Activated naive CD4-positive, alpha-beta T cell treated with anti-CD3 and anti-CD28 coated beads for 36 hours (primary cell): ENCODE measurements at regions of chr1 and their contacts with region 1.

Region 1: DNA sequence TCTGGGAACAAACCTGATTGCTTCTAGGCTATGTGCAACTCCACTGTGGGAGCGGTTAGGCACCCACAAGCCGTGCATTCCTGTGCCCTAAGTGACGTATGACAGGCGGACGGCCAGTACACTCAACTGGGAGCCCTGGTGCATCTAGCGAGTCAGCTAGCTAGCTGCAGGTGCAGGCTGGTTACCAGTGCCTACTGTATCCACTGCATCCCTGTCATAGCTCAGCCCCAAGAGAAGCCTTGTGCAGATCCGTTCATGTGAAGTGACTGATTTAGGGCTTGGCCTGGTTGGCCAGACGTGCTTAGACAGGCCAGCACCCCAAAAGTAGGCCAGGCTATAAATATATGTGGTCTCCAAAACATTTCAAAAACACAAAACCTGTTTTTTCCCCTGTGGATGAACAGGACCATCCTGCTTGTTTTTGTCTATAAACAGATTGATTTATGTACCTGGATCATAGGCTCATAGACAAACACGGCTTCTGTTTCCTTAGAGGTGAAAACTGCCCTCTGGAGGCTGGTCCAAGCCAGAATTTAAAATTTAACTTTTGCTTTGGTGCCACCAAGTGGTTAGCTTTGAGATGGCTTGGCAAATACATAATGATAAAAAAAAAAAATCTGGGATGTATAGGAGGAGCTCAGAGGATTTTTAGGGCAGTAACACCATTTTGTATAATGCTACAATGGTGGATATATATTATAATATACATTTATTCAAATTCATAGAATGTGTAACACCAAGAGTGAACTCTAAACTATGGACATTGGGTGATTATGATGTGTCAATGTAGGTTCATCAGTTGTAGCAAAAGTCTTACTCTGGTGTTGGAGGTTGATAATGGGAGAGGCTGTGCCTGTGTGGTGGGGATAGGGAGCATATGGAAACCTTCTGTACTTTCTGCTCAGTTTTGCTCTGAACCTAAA is 68.5 kb downstream of the GIPC2 start:
- DNase-seq: peak; percentile 79
- H3K4me3 Mint-ChIP-seq: no peak overlapping the region
- H3K27ac Mint-ChIP-seq: no peak overlapping the region
- H3K4me1 Mint-ChIP-seq: peaks cover 8% of the 10 kb centered on the region
- H3K27me3 Mint-ChIP-seq: no peaks in the 10 kb centered on the region

Region 2: DNA sequence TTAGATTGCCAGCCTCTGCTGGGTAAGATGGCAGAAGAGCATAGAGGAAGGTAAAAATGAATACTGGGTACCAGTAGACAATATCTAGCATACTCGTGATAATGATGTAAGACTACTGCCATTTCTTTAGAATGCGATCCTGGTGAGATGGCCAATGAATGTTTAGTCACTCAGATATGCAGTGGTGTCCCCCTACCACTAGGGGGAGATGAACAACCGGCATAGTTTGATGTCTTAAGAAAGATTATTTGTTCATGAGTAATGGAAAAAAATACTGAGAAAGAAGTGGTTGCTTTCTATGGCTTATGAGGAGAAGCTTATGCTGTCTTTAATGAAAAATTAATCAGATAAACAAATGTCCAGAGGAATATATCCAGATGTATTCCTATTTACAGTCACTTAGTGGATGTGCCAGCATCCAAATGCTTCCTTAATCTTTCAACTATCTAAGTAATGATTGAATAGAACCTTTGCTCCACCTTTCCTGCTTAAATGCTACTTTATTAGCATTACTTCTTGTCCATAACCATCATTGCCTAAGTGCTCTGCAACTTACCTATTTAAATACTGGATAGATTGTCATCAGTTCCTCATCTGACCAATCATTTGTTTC is 1783.2 kb before region 1 on chr1:
- CTCF ChIA-PET with region 1: no interaction called
- intact Hi-C with region 1: loop called (anchors 2 kb)
- DNase-seq: peak; percentile 68
- H3K4me3 Mint-ChIP-seq: no peak overlapping the region
- H3K27ac Mint-ChIP-seq: no peak overlapping the region
- H3K4me1 Mint-ChIP-seq: peaks cover 14% of the 10 kb centered on the region
- H3K27me3 Mint-ChIP-seq: no peaks in the 10 kb centered on the region

Region 3: DNA sequence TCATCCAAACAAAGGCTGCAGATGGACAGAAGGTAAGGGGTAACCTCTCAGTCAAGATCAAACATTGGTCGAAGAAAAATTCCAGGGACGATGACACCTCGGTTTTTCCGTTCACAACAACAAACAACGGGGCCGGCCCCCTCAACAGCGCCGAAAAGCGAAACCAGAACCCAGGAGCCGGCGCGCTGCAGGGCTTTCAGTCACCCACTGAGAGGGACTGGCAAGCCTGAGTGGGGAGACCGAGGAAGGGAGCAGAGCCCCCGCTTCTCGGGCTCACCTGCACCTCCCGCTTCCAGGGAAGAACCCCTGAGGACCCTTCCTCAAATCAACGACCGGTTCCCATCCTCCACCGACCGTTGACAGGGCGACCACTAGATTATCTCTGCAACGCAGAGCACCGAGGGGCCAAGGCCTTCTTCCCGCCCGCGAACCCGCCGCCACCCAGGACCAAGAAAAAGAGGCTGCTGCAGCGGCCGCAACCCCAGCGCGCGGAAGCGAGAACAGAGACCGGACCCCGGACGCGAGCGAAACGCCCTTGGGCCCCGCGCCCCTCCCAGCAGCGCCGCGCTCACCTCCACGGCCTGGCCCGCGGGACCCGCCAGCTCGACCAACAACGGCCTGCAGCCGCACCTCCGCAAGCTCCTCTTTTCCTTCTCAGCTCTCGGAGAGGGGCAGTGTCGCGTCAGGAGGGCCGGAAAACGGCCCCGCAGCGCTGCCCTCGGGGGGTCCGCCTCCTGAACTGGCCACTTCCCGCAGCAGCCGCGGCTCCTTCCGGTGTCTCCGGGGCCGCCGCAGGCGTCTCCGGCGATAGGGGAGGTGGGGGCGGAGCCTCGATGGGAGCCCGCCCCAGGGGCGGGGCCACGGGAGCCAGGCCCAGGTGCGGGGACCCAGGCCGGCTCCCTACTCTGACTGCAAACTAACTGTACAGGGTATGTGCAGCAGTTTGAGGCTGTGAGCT is 354.9 kb before region 1 on chr1 and contains the start of gene USP33:
- CTCF ChIA-PET with region 1: no interaction called
- intact Hi-C with region 1: loop called (anchors 5 kb)
- DNase-seq: peak; percentile 93
- H3K4me3 Mint-ChIP-seq: peak within 1 kb of the TSS; percentile 90
- H3K27ac Mint-ChIP-seq: peak within 1 kb of the TSS; percentile 93
- H3K4me1 Mint-ChIP-seq: peaks cover 46% of the 10 kb centered on the region
- H3K27me3 Mint-ChIP-seq: no peaks in the 10 kb centered on the region
- total RNA-seq, gene USP33: 32.6 to 35.6 TPM

Region 4: DNA sequence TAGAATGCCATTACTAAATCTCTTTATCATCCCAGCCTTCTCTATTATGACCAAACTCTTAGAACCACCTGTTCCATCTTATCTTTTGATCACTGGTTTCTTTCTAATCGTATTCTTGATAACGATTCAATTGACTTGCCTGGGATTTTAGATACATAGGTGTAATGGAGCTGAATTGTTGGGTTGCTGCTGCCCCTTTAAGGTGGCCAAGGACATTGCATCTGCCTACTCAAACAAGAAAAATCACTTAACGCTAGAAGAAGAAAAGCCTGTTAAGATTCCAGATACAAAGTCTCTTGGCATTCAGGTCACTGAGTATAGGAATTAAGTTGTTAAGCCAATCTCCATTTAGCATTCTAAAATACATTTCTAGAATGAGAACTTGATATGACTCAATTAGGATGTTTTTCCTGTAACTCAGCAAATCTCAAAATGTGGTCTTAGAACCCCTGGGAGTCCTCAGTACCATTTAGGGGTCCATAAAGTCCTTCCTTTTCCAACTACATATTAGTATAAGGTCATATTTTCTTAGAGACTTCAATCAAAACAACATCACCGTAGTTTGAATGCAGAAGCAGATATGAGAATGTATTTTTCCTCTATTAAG is 213.5 kb before region 1 on chr1:
- CTCF ChIA-PET with region 1: interaction called, 3 read pairs
- intact Hi-C with region 1: loop called (anchors 5 kb)
- DNase-seq: peak; percentile 40
- H3K4me3 Mint-ChIP-seq: no peak overlapping the region
- H3K27ac Mint-ChIP-seq: no peak overlapping the region
- H3K4me1 Mint-ChIP-seq: no peaks in the 10 kb centered on the region
- H3K27me3 Mint-ChIP-seq: peaks cover 2% of the 10 kb centered on the region

Region 5: GRCh38 chr1:78045926-78046778 is 68.1 kb before region 1 on chr1 and contains the start of gene GIPC2:
- CTCF ChIA-PET with region 1: interaction called, 4 read pairs
- intact Hi-C with region 1: loop called (anchors 5 kb)
- DNase-seq: peak; percentile 63
- H3K4me3 Mint-ChIP-seq: peak within 1 kb of the TSS; percentile 74
- H3K27ac Mint-ChIP-seq: no peak within 1 kb of the TSS
- H3K4me1 Mint-ChIP-seq: peaks cover 25% of the 10 kb centered on the region
- H3K27me3 Mint-ChIP-seq: peaks cover 38% of the 10 kb centered on the region
- total RNA-seq, gene GIPC2: 0.10 to 0.31 TPM